ENCODE measurements at regions of chr4 and their contacts with region 1.

Region 1: GRCh38 chr4:102344954-102345794 is at the start of gene SLC39A8:
- DNase-seq: peak; percentile 50 to 92
- H3K4me3 ChIP-seq: peak within 1 kb of the TSS; percentile 83 to 86
- H3K27ac ChIP-seq: peak within 1 kb of the TSS; percentile 23 to 64
- H3K4me1 ChIP-seq: peaks cover 0 to 3% of the 10 kb centered on the region in 2 donors
- H3K27me3 ChIP-seq: no peaks in the 10 kb centered on the region
- CTCF ChIP-seq: peak; percentile 79 to 86 (median 85)
- total RNA-seq, gene SLC39A8: 17.1 TPM

Region 2: GRCh38 chr4:101321481-101322042 is 1023.6 kb before region 1 on chr4:
- intact Hi-C with region 1: no loop called
- DNase-seq: no peak
- H3K4me3 ChIP-seq: peak overlapping the region in 1 of 2 donors; percentile 32
- H3K27ac ChIP-seq: peak overlapping the region; percentile 45 to 51
- H3K4me1 ChIP-seq: peaks cover 0 to 11% of the 10 kb centered on the region in 2 donors
- H3K27me3 ChIP-seq: no peaks in the 10 kb centered on the region
- CTCF ChIP-seq: no peak

Region 3: GRCh38 chr4:102430461-102430910 is 85.3 kb after region 1 on chr4:
- intact Hi-C with region 1: loop called (anchors 2 kb)
- DNase-seq: no peak
- H3K4me3 ChIP-seq: peak overlapping the region; percentile 66 to 87
- H3K27ac ChIP-seq: peak overlapping the region; percentile 49 to 70
- H3K4me1 ChIP-seq: no peaks in the 10 kb centered on the region
- H3K27me3 ChIP-seq: no peaks in the 10 kb centered on the region
- CTCF ChIP-seq: no peak

Region 4: DNA sequence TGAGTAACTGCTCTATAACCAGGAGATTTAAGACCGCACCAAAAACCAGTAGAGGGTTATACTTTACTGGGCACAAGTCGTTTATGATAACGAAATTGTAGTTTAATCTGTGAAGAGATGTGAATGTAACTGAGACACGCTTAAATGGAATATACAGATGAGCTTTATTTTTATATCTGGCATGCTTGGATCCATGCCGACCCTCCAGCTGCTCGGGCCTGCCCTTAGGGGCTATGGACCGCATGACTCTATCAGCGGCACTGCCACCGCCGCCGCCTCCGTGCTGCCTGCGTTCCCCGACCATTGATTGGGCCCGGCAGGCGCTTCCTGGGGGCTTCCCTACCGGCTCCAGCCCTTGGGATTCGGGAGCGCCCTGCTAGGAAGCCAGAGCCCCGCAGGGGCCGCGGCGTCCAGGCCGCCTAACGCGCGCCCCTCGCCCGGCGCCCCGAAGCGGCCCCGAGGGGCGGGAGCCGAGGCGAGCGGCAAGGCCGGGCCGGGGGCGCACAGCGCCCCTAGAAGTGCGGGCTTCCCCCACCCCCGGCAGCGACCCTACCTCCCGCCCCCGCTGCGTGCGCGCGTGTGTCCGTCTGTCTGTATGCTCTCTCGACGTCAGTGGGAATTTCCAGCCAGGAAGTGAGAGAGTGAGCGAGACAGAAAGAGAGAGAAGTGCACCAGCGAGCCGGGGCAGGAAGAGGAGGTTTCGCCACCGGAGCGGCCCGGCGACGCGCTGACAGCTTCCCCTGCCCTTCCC is 155.7 kb after region 1 on chr4 and contains the start of gene NFKB1:
- intact Hi-C with region 1: loop called (anchors 2 kb)
- DNase-seq: peak; percentile 19 to 82
- H3K4me3 ChIP-seq: peak within 1 kb of the TSS; percentile 88 to 98
- H3K27ac ChIP-seq: peak within 1 kb of the TSS; percentile 93 to 99
- H3K4me1 ChIP-seq: peaks cover 0 to 20% of the 10 kb centered on the region in 2 donors
- H3K27me3 ChIP-seq: no peaks in the 10 kb centered on the region
- CTCF ChIP-seq: no peak
- total RNA-seq, gene NFKB1: 34.5 TPM

Region 5: DNA sequence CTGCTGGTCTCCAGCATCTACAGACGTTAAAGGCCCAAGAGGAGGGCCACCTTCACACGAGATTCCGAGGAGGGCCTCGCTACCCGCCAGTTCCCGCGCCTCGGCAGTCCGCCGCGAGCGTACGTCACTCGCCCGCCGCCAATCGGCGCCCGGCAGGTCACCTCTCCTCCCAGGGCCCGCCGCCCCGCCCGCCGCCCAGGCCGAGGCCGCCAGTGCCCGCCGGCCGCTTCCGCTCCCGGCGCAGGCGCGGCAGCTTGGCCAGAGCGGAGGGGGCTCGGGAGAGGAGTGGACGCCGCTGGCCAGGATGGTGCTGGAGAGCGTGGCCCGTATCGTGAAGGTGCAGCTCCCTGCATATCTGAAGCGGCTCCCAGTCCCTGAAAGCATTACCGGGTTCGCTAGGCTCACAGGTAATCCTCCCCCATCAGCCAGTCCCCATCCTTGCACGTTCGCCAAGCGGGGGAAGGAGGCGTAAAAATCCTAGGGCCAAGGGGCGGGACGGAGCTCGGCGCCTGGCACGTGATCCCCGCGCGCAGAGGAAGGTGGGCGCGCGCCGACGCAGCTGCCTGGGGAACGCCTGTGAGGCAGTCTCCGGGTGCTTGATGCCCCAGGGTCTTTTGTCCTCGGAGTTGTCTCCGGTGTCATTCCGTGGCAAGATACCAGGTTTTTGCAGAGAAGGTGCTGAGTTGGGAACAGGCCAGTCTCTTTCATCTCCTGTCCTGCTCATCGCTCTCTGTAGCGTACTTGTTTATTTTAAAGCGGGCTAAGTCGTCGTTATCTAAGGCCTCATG is 523.8 kb after region 1 on chr4 and contains the start of gene CISD2:
- intact Hi-C with region 1: loop called (anchors 2 kb)
- DNase-seq: peak; percentile 71 to 95
- H3K4me3 ChIP-seq: peak within 1 kb of the TSS; percentile 76 to 86
- H3K27ac ChIP-seq: peak within 1 kb of the TSS; percentile 96 to 98
- H3K4me1 ChIP-seq: peaks cover 6 to 16% of the 10 kb centered on the region in 2 donors
- H3K27me3 ChIP-seq: no peaks in the 10 kb centered on the region
- CTCF ChIP-seq: peak in 1 of 3 experiments; percentile 2
- total RNA-seq, gene CISD2: 10.4 TPM

Region 6: GRCh38 chr4:103008875-103009729 is 663.9 kb after region 1 on chr4:
- intact Hi-C with region 1: loop called (anchors 5 kb)
- DNase-seq: no peak
- H3K4me3 ChIP-seq: no peak overlapping the region
- H3K27ac ChIP-seq: no peak overlapping the region
- H3K4me1 ChIP-seq: peaks cover 6 to 14% of the 10 kb centered on the region in 2 donors
- H3K27me3 ChIP-seq: no peaks in the 10 kb centered on the region
- CTCF ChIP-seq: peak; percentile 56 to 76 (median 59)

Region 7: GRCh38 chr4:103075901-103076739 is 730.9 kb after region 1 on chr4:
- intact Hi-C with region 1: loop called (anchors 5 kb)
- DNase-seq: peak in 1 of 2 donors; percentile 78
- H3K4me3 ChIP-seq: peak overlapping the region; percentile 58 to 85
- H3K27ac ChIP-seq: peak overlapping the region; percentile 89 to 91
- H3K4me1 ChIP-seq: peaks cover 3 to 9% of the 10 kb centered on the region in 2 donors
- H3K27me3 ChIP-seq: no peaks in the 10 kb centered on the region
- CTCF ChIP-seq: peak in 1 of 3 experiments; percentile 17